PC-3 (cell line): ENCODE measurements at regions of chr1 and their contacts with region 1.

Region 1: GRCh38 chr1:193019442-193020026 is 39.6 kb downstream of the UCHL5 start:
- DNase-seq: peak; percentile 75
- ATAC-seq: peak; percentile 63
- H3K4me3 ChIP-seq: no peak overlapping the region
- H3K27ac ChIP-seq: peak overlapping the region; percentile 65
- H3K4me1 ChIP-seq: peaks cover 10% of the 10 kb centered on the region
- H3K27me3 ChIP-seq: no peaks in the 10 kb centered on the region
- CTCF ChIP-seq: peak; percentile 67

Region 2: GRCh38 chr1:192814805-192815204 is 204.7 kb before region 1 on chr1:
- CTCF ChIA-PET with region 1: no interaction called
- POLR2A ChIA-PET with region 1: interaction called, 22 read pairs
- intact Hi-C with region 1: loop called (anchors 1 kb)
- DNase-seq: no peak
- ATAC-seq: no peak
- H3K4me3 ChIP-seq: no peak overlapping the region
- H3K27ac ChIP-seq: no peak overlapping the region
- H3K4me1 ChIP-seq: peaks cover 4% of the 10 kb centered on the region; the same call in 1 of the 2 replicates
- H3K27me3 ChIP-seq: no peaks in the 10 kb centered on the region
- CTCF ChIP-seq: no peak

Region 3: GRCh38 chr1:192860478-192861185 is 158.9 kb before region 1 on chr1:
- CTCF ChIA-PET with region 1: no interaction called
- POLR2A ChIA-PET with region 1: no interaction called
- intact Hi-C with region 1: loop called (anchors 1 kb)
- DNase-seq: peak; percentile 36
- ATAC-seq: peak; percentile 43
- H3K4me3 ChIP-seq: no peak overlapping the region
- H3K27ac ChIP-seq: peak overlapping the region; percentile 98
- H3K4me1 ChIP-seq: peaks cover 27% of the 10 kb centered on the region
- H3K27me3 ChIP-seq: no peaks in the 10 kb centered on the region
- CTCF ChIP-seq: no peak

Region 4: GRCh38 chr1:192967901-192968300 is 51.6 kb before region 1 on chr1:
- CTCF ChIA-PET with region 1: no interaction called
- POLR2A ChIA-PET with region 1: no interaction called
- intact Hi-C with region 1: loop called (anchors 5 kb)
- DNase-seq: peak; percentile 52
- ATAC-seq: peak; percentile 82
- H3K4me3 ChIP-seq: no peak overlapping the region
- H3K27ac ChIP-seq: peak overlapping the region; percentile 62
- H3K4me1 ChIP-seq: peaks cover 16% of the 10 kb centered on the region
- H3K27me3 ChIP-seq: no peaks in the 10 kb centered on the region
- CTCF ChIP-seq: no peak